GM13976 (cell line): ENCODE measurements at regions of chr11 and their contacts with region 1.

Region 1: DNA sequence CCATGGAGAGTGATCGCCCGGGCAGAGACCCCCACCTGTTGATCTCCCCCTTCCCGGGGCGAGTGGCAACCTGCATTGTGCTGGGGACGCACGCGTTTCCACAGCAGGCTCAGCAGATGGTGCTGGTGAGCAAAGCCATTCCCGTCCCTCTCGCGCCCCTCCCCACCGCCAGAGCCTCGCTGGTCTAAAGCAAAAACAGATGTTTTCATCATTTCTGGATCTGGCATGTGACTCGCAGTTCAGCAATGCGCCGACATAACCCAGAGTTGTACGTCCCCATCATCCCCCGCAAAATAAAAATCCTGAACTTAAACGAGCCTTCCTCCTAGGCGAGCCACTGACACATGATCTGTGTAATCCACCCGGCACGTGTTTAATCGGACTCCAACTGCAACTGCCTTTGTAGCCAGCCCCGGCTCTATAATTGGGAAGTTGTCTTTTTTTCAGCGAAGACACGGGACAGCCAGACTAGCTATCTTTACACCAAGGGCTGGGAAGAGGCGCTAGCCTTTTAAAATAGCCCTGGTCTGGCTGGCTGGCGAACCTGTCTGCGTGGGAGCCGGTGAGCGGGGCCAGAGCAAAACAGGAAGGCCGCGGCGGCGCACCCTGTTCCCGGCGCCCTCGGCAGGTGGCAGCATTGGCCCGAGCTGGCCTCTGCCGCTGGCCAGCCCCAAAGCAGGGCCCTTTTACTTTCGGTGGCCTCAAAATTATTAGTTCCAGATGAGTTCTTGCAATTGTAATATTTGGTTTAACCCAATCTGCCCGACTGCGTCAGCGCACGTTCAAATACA is 203.0 kb upstream of the SORL1-AS1 start:
- DNase-seq: peak; percentile 91
- CTCF ChIP-seq: peak; percentile 95

Region 2: DNA sequence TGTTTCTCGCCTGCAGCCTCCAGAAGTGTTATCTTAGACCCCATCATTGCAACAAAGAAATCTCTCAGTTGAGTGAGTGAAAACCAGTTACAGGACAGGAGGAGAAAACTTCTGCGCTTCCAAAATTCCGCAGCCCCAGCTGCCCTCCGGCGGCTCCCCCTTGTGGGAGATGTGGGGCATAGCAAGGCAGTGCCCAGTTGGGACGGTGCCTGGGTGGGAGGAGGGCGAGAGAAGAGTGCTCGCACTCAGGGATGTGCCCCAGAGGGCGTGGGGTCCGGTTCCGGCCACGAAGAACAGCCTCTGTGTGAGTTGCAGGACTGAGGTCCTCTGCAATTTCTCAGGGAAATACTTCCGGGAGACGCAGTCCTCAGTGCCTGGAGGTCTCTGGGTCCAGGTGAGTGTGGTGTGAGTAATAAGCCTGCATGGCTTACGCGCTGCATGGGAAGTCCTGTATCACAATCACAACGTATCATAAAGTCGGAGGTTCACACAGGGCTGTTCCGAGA is 547.3 kb after region 1 on chr11:
- in situ Hi-C with region 1: loop called (anchors 10 kb)
- DNase-seq: peak; percentile 74
- CTCF ChIP-seq: peak; percentile 85

Region 3: DNA sequence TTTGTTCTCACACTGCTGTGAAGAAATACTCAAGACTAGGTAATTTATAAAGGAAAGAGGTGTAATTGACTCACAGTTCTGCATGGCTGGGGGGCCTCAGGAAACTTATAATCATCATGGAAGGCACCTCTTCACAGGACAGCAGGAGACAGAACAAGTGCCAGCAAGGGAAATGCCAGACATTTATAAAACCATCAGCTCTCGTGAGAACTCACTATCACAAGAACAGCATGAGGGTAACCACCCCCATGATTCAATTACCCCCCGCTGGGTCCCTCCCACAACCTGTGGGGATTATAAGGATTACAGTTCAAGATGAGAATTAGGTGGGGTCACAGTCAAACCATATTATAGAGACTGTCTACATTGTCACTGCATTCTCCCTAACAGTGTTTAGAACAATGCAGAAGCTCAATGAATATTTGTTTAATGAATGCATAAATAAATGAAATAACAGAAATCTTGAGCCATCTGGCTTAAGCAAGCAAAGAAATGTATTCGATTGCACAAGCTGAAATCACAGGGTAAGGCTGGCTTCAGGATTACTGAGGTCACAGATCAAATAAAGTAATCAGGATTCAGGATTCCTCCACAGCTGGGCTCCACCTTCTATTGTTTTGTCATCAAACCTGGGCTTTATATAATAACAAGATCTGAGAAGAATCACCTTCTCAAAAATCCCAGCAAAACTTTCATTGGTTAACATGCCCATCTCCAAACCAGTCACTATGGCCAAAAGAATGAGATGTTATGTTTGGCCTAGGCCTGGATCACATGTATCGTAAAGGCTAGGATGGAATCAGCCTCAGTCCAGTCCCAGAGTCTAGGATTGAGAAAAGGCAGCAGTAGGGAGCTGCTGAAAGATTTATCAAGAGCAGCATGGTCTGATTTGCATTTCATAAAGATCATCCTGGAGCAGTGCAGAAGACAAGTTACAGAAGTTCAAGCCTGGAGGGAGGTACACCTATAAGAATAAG is 862.0 kb after region 1 on chr11:
- in situ Hi-C with region 1: loop called (anchors 10 kb)
- DNase-seq: no peak
- CTCF ChIP-seq: no peak